ENCODE measurements at regions of chr9 and their contacts with region 1.

Region 1: DNA sequence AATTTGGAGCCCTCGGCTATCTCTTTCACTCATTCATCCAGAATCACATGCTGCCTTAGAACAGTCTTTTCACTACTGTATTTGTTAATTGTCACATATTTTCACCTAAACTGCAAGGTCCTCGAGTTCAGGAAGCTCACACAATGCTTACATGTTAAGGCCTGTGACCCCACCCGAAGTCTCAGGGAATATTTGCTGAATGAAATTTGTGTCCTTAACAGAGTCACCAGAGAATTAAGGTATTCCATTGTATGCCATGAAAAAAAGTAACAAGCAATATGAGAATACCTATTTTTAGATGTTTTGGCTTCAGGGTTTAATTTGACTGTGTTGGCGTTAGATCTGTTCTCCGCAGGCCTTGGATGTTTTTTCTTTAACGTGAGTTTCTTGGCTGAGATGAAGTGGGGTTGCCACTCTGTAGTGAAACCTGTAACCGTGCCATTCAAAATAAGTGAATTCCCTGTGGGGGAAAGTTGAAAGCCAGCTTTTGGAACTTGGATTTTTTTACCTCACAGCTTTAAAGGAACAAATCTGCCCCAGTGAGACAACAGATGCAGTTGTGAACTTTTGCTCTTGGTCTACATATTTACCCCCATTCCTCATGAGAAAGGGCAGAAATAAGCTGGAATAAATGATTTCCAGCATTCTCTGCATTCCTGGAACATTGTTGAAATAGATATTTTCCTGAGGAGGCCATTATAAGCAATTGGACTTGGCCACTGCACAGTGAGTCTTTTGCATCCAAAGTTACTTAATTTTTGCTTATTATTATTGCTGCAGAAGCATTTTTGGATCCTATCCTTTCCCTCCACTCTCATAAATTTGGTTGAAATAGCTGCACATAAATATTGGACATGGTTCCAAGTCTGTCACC is 35.9 kb upstream of the FBP1 start:
- DNase-seq: no peak
- H3K4me3 ChIP-seq: no peak overlapping the region
- H3K27ac ChIP-seq: peak overlapping the region in 3 of 4 donors; percentile 16 to 44 (median 38)
- H3K4me1 ChIP-seq: peaks cover 11 to 17% (median 15%) of the 10 kb centered on the region in 4 donors
- H3K27me3 ChIP-seq: no peaks in the 10 kb centered on the region
- CTCF ChIP-seq: no peak
- EP300 ChIP-seq: no peak
- POLR2A ChIP-seq: no peak

Region 2: DNA sequence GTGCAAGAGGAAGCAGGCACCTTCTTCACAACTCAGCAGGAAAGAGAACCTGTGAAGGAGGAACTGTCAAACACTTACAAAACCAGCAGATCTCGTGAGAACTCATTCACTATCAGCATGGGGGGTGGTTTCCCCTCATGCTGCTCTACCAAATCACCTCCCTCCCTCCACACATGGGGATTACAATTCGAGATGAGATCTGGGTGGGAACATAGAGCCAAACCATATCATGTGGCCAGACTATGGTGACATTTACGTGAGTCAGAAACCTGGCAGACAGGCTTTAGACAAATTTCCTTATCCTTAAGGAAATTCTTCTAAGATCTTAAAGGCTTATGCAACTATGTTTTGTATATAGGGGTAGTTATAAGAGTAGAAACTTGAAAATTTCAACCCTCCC is 42.5 kb after region 1 on chr9:
- intact Hi-C with region 1: no loop called
- DNase-seq: no peak
- H3K4me3 ChIP-seq: no peak overlapping the region
- H3K27ac ChIP-seq: no peak overlapping the region
- H3K4me1 ChIP-seq: no peaks in the 10 kb centered on the region
- H3K27me3 ChIP-seq: no peaks in the 10 kb centered on the region
- CTCF ChIP-seq: no peak
- EP300 ChIP-seq: no peak
- POLR2A ChIP-seq: no peak

Region 3: GRCh38 chr9:94772639-94773303 is 97.5 kb after region 1 on chr9:
- intact Hi-C with region 1: loop called (anchors 5 kb)
- DNase-seq: no peak
- H3K4me3 ChIP-seq: no peak overlapping the region
- H3K27ac ChIP-seq: peak overlapping the region in 1 of 4 donors; percentile 15
- H3K4me1 ChIP-seq: peaks cover 0 to 12% (median 9%) of the 10 kb centered on the region in 4 donors
- H3K27me3 ChIP-seq: no peaks in the 10 kb centered on the region
- CTCF ChIP-seq: no peak
- EP300 ChIP-seq: no peak
- POLR2A ChIP-seq: no peak

Measured in esophagus muscularis mucosa (tissue), 4 donors.